A549 (cell line): ENCODE measurements at regions of chr20 and their contacts with region 1.

Region 1: GRCh38 chr20:956330-956951 is 40.3 kb upstream of the ANGPT4 start:
- DNase-seq: peak; percentile 77 to 89
- ATAC-seq: peak; percentile 72 to 90
- H3K4me3 ChIP-seq: no peak overlapping the region
- H3K27ac ChIP-seq: no peak overlapping the region
- H3K4me1 ChIP-seq: no peaks in the 10 kb centered on the region
- CTCF ChIP-seq: peak; percentile 98
- EP300 ChIP-seq: no peak
- POLR2A ChIP-seq: no peak
- RAD21 ChIP-seq: peak; percentile 98 to 99

Region 2: DNA sequence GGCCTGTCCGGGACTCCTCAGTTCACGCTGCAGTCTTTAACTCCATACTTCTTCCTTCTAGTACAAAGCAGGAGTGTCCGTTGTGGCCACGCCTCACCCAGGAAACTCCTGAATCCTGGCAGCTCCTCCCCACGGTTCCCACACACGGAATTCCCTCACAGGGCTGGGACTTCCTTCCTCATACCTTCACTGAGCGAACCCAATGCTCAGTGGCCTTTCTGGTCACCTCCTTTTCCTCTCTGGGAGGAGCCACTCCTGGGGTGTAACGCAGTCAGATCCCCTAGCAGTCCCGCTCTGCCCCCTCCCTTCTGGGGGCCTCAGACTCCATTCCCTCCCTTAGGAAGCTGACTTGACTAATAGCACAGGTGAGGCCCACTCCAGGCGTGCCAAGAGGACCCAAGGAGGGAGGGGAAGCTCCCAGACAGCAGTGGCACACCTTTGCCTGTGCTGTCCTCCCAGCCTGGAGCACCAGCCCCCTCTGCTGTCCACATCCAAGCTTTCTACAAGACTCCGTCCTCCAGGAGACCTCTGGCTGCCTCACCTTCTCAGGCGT is 187.9 kb before region 1 on chr20 and contains the start of gene SLC52A3:
- CTCF ChIA-PET with region 1: interaction called, 11 read pairs
- POLR2A ChIA-PET with region 1: no interaction called
- DNase-seq: peak; percentile 74 to 79
- ATAC-seq: peak; percentile 83 to 91
- H3K4me3 ChIP-seq: no peak within 1 kb of the TSS
- H3K27ac ChIP-seq: peak within 1 kb of the TSS; percentile 18 to 50; a peak in 1 of 6 replicates
- H3K4me1 ChIP-seq: peaks cover 11% of the 10 kb centered on the region; the same call in 2 of the 3 replicates
- CTCF ChIP-seq: peak; percentile 50
- EP300 ChIP-seq: no peak
- POLR2A ChIP-seq: no peak
- RAD21 ChIP-seq: peak; percentile 57 to 75
- polyA plus RNA-seq, gene SLC52A3: 0.63 and 0.95 TPM in 2 replicates

Region 3: DNA sequence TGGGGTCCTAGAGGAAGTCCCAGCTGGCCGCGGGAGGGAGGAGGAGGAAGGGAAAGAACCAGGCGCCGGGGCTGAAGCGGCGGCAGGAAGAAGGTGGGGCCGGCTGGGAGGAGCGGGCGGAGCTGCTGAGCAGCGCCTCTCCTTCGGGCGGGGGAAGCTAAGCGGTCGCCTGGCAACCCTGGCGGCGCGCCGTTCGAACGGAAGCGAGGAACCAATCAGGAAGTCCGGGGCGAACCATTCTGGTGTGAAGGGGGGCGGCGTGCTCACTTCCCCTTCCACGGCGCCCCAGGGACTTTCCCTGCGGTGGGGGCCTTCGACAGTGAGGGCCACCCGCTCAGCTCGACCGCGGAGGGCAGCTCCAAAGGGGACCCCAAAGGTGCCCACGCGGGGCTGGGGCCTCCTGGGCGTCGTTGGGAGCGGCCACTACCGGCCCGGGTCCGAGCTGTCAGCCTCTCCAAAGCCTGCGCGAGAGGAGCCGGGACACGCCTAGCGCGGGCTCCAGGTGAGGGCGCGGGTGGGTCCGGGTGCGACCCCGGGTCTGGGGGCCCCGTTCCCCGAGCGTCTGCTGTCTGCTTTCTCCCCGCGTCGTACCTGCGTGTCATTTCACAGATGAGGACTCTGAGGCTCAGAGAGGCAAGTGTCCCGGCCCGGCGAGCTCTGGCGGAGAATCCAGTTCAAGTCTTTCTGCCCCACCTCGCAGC is 122.8 kb before region 1 on chr20 and contains the start of gene FAM110A:
- CTCF ChIA-PET with region 1: interaction called, 872 read pairs
- POLR2A ChIA-PET with region 1: no interaction called
- DNase-seq: peak; percentile 94 to 96
- ATAC-seq: peak; percentile 97 to 98
- H3K4me3 ChIP-seq: peak within 1 kb of the TSS; percentile 75
- H3K27ac ChIP-seq: peak within 1 kb of the TSS; percentile 86 to 92
- H3K4me1 ChIP-seq: peaks cover 6% of the 10 kb centered on the region; the same call in 2 of the 3 replicates
- CTCF ChIP-seq: no peak
- EP300 ChIP-seq: no peak
- POLR2A ChIP-seq: peak; percentile 27; the same call in 1 of the 2 replicates
- RAD21 ChIP-seq: no peak
- polyA plus RNA-seq, gene FAM110A: 3.1 TPM in 2 replicates

Region 4: GRCh38 chr20:891058-891705 is 65.3 kb before region 1 on chr20:
- CTCF ChIA-PET with region 1: interaction called, 48 read pairs
- POLR2A ChIA-PET with region 1: no interaction called
- DNase-seq: no peak
- ATAC-seq: no peak; a peak in 1 of 6 replicates
- H3K4me3 ChIP-seq: no peak overlapping the region
- H3K27ac ChIP-seq: no peak overlapping the region
- H3K4me1 ChIP-seq: no peaks in the 10 kb centered on the region
- CTCF ChIP-seq: no peak
- EP300 ChIP-seq: no peak
- POLR2A ChIP-seq: no peak
- RAD21 ChIP-seq: no peak

Region 5: GRCh38 chr20:944774-945410 is 11.5 kb before region 1 on chr20:
- CTCF ChIA-PET with region 1: interaction called, 90 read pairs
- POLR2A ChIA-PET with region 1: no interaction called
- DNase-seq: no peak
- ATAC-seq: no peak
- H3K4me3 ChIP-seq: no peak overlapping the region
- H3K27ac ChIP-seq: no peak overlapping the region
- H3K4me1 ChIP-seq: no peaks in the 10 kb centered on the region
- CTCF ChIP-seq: no peak
- EP300 ChIP-seq: no peak
- POLR2A ChIP-seq: no peak
- RAD21 ChIP-seq: no peak

Region 6: DNA sequence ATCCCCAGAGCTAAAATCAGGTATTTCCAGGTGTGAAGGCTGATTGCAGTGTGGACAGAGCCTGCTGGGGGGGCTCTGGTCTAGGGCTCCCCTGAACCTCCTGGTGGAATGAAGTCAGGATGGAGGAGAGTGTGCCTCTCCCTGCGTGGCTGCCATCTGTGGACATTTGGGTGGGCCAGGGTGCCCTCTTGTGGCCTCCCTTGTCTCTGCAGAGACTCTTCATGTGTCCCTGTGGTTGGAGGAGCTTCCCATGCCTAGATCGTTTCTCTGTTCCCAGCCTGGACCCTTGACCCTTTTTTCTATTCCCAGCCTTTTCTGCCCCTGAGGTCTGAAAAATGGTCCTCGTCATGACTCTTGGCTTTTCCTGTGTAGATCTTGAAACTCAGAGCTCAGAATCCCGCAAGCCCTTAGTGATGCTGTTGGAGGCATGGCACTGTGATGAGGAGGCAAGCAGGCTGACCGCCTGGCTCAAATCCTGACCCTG is 152.0 kb after region 1 on chr20:
- CTCF ChIA-PET with region 1: interaction called, 33 read pairs
- POLR2A ChIA-PET with region 1: no interaction called
- DNase-seq: peak; percentile 61 to 75
- ATAC-seq: peak; percentile 96 to 98
- H3K4me3 ChIP-seq: no peak overlapping the region
- H3K27ac ChIP-seq: no peak overlapping the region
- H3K4me1 ChIP-seq: no peaks in the 10 kb centered on the region
- CTCF ChIP-seq: peak; percentile 74
- EP300 ChIP-seq: no peak
- POLR2A ChIP-seq: no peak
- RAD21 ChIP-seq: peak; percentile 63 to 68

Region 7: GRCh38 chr20:1357921-1358671 is 401.7 kb after region 1 on chr20:
- CTCF ChIA-PET with region 1: no interaction called
- POLR2A ChIA-PET with region 1: no interaction called
- DNase-seq: no peak
- ATAC-seq: no peak
- H3K4me3 ChIP-seq: no peak overlapping the region
- H3K27ac ChIP-seq: no peak overlapping the region
- H3K4me1 ChIP-seq: no peaks in the 10 kb centered on the region
- CTCF ChIP-seq: no peak
- EP300 ChIP-seq: no peak
- POLR2A ChIP-seq: no peak
- RAD21 ChIP-seq: no peak